ENCODE measurements at regions of chr7 and their contacts with region 1.

Region 1: DNA sequence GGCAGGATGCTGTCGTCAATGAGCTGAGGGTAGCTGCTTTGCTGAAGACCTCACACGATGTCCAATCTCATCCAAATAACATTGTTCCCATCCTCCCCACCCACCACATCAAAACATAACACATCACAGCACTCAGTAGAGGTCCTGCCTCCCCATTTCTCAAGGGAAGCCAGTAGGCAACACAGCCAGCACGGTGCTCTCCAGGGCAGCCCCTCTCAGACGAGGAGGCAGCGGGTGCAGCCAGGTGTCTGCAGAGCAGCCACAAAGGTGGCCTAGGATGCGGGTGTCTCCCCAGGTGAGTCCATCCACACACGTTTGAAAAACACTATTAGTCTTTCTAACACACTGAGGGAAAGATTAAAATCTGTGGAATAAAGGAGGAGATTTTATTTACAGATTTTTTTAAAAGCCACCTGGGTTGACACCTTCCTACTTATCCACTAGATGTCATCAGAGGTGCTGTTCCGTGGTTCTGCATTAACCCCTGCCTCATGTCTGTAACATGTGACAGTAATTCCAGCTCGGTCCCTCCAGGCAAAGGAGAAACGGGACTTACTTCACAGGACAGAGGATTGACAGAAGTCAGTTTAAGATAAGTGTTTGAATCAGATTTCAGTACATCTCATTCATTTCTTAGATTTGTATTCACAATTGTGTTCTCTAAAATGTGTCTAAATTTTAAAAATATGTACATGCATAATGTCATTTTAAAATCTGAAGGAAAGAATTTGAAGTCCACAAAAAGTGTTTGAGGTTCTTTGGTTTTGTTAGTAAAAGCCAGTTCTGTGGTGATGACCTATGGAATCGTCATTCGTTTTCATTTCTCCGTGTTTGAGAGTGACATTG is 68.0 kb downstream of the LANCL2 start:
- DNase-seq: peak in 5 of 9 donors; percentile 44 to 54 (median 48)
- ATAC-seq: peak; percentile 61
- H3K4me3 ChIP-seq: no peak overlapping the region
- H3K4me3 Mint-ChIP-seq: peak overlapping the region in 1 of 10 donors; percentile 19
- H3K27ac ChIP-seq: no peak overlapping the region
- H3K27ac Mint-ChIP-seq: peak overlapping the region in 5 of 9 donors; percentile 7 to 76 (median 67)
- H3K4me1 ChIP-seq: peaks cover 0 to 29% of the 10 kb centered on the region in 2 donors
- H3K4me1 Mint-ChIP-seq: peaks cover 17 to 46% (median 40%) of the 10 kb centered on the region in 7 donors
- H3K27me3 ChIP-seq: no peaks in the 10 kb centered on the region
- H3K27me3 Mint-ChIP-seq: no peaks in the 10 kb centered on the region

Region 2: DNA sequence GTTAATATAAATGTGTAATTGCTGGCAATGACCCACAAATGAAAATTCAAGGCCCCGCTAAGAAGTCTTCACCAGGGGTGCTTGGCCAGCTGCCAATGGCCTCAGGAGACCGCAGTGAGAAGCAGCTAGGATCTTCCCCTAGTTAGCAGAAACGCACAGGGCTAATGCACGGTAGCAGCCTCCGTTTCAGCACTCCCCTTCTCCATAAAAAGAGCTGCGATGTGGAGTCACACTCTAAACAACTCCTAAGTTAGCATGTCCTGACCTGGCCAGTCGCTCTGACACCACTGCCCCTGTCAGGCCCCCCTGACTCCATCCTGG is 290.4 kb after region 1 on chr7:
- CTCF ChIA-PET with region 1: no interaction called
- POLR2A ChIA-PET with region 1: no interaction called
- intact Hi-C with region 1: loop called in 1 of 2 experiments (anchors 2 kb)
- DNase-seq: no peak
- ATAC-seq: no peak
- H3K4me3 ChIP-seq: no peak overlapping the region
- H3K4me3 Mint-ChIP-seq: no peak overlapping the region
- H3K27ac ChIP-seq: no peak overlapping the region
- H3K27ac Mint-ChIP-seq: no peak overlapping the region
- H3K4me1 ChIP-seq: no peaks in the 10 kb centered on the region
- H3K4me1 Mint-ChIP-seq: peaks cover 0 to 3% (median 0%) of the 10 kb centered on the region in 7 donors
- H3K27me3 ChIP-seq: no peaks in the 10 kb centered on the region
- H3K27me3 Mint-ChIP-seq: peaks cover 0 to 9% (median 0%) of the 10 kb centered on the region in 5 donors

Region 3: DNA sequence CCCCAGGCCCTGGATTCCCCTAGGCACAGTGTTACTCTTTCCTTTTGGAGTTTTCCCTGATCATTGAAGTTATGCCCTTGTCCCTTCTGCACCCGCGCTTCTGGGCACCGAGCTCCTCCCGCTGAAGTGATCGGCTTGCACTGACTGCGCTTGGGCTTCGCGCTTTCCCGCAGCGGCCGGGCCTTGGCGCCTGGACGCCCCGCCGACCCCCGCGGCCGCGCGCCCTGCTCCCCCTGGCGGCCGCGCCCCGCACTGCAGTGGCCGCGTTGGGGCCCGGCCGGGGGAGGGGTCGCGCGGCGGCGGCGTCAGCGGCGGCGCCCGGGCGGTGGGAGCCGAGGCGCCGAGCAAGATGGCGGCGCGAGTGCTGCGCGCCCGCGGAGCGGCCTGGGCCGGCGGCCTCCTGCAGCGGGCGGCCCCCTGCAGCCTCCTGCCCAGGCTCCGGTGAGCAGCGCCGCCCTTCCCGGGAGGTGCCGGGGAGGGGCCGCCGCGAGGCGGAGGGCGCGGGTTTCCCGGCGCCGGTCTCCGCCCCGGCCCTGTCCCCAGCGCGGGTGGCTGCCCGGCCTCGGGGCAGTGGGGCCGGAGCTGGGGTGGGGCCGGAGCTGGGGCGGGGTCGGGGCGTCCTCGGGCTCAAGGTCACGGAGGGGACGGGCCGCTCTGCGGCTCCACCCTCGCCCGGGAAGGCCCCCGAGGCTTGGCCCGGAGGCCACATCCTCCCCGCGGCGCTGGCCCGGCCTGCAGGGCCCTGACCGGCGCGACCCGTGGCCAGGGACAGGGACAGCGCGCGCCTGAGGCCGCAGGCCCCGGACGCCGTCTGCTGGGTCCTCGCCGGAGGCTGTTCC is 531.3 kb after region 1 on chr7 and contains the start of gene NIPSNAP2:
- CTCF ChIA-PET with region 1: no interaction called
- POLR2A ChIA-PET with region 1: no interaction called
- intact Hi-C with region 1: loop called (anchors 2 to 5 kb)
- DNase-seq: peak; percentile 37 to 86 (median 68)
- ATAC-seq: peak; percentile 94
- H3K4me3 ChIP-seq: peak within 1 kb of the TSS; percentile 50
- H3K4me3 Mint-ChIP-seq: peak within 1 kb of the TSS; percentile 79 to 91 (median 88)
- H3K27ac ChIP-seq: peak within 1 kb of the TSS; percentile 89
- H3K27ac Mint-ChIP-seq: peak within 1 kb of the TSS; percentile 89 to 94 (median 91)
- H3K4me1 ChIP-seq: peaks cover 10% of the 10 kb centered on the region in 2 donors
- H3K4me1 Mint-ChIP-seq: peaks cover 24 to 55% (median 42%) of the 10 kb centered on the region in 7 donors
- H3K27me3 ChIP-seq: no peaks in the 10 kb centered on the region
- H3K27me3 Mint-ChIP-seq: no peaks in the 10 kb centered on the region
- total RNA-seq, gene NIPSNAP2: 30.1 to 37.8 (median 34.4) TPM

Measured in naive thymus-derived CD4-positive, alpha-beta T cell (primary cell).